Activated CD8-positive, alpha-beta T cell treated with anti-CD3 and anti-CD28 coated beads for 36 hours (primary cell): ENCODE measurements at regions of chr22 and their contacts with region 1.

Region 1: GRCh38 chr22:45163451-45164269 is at the start of gene NUP50:
- DNase-seq: peak; percentile 96
- ATAC-seq: peak; percentile 92
- H3K4me3 Mint-ChIP-seq: peak within 1 kb of the TSS; percentile 90
- H3K27ac Mint-ChIP-seq: peak within 1 kb of the TSS; percentile 95
- H3K4me1 Mint-ChIP-seq: peaks cover 51% of the 10 kb centered on the region
- H3K27me3 Mint-ChIP-seq: no peaks in the 10 kb centered on the region
- CTCF ChIP-seq: no peak
- total RNA-seq, gene NUP50: 123 to 133 TPM

Region 2: GRCh38 chr22:45101515-45102227 is 62.0 kb before region 1 on chr22:
- CTCF ChIA-PET with region 1: interaction called, 16 read pairs
- POLR2A ChIA-PET with region 1: no interaction called
- intact Hi-C with region 1: no loop called
- DNase-seq: peak; percentile 64
- ATAC-seq: peak; percentile 87
- H3K4me3 Mint-ChIP-seq: no peak overlapping the region
- H3K27ac Mint-ChIP-seq: no peak overlapping the region
- H3K4me1 Mint-ChIP-seq: no peaks in the 10 kb centered on the region
- H3K27me3 Mint-ChIP-seq: peaks cover 9% of the 10 kb centered on the region
- CTCF ChIP-seq: peak; percentile 48